Heart left ventricle (tissue), 16 donors: ENCODE measurements at regions of chr3 and their contacts with region 1.

Region 1: DNA sequence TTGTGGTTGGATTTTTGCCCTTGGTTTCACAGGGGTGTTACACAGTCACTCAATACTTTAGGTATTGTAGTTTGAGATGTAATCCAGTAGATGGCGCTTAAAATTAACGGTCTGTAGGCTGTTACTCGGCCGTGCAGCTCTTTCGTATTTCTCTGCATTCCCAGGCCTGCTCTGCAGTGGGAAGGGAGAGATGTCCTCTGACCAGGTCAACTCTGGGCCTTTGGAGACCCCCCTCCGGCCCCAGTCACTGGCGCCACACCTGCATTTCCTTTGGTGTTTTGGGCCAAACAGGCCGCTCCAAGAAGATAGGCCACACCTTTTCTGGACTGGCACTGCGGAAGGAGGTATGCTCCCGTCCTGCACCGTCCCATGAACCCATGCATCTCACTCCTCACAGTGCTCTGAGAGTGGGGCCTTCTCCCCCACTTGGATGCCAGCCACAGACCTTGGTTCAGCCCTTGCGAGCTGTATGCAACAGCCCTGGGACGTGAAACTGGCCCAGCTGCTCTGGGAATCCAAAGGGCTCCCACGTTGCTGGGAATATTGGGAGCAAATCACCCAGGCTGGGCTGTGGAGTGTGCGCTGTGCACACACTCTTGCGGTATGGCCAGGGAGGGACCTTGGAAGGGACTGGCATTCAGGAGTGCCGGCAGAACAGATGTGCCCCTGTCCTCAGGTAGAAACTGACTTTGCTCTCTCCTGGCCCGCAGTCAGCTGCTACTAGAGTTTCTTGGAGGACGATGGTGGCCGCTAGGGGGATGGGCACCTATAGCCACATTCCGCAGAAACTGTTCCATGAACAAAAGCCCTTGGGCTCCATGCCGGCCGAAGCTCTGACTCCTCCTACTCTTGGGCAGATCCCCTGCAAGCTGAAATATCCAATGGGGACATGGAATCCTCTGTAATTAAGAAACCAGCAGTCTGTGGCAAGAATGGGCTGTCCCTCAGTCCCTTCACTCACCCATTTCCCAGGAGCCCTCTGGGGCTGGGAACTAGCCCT is 410.5 kb upstream of the CADM2 start:
- DNase-seq: peak in 2 of 5 donors; percentile 15 to 23
- ATAC-seq: peak in 3 of 4 donors; percentile 63 to 69 (median 65)
- H3K4me3 ChIP-seq: peak overlapping the region in 3 of 12 donors; percentile 10 to 18 (median 16)
- H3K27ac ChIP-seq: no peak overlapping the region
- H3K4me1 ChIP-seq: no peaks in the 10 kb centered on the region
- H3K27me3 ChIP-seq: no peaks in the 10 kb centered on the region
- CTCF ChIP-seq: peak; percentile 15 to 58 (median 42)
- POLR2A ChIP-seq: no peak

Region 2: GRCh38 chr3:84586311-84586826 is 38.1 kb after region 1 on chr3:
- intact Hi-C with region 1: no loop called
- DNase-seq: no peak
- ATAC-seq: no peak
- H3K4me3 ChIP-seq: no peak overlapping the region
- H3K27ac ChIP-seq: no peak overlapping the region
- H3K4me1 ChIP-seq: no peaks in the 10 kb centered on the region
- H3K27me3 ChIP-seq: no peaks in the 10 kb centered on the region
- CTCF ChIP-seq: no peak
- POLR2A ChIP-seq: no peak

Region 3: GRCh38 chr3:84772841-84773240 is 224.6 kb after region 1 on chr3:
- intact Hi-C with region 1: loop called in 2 of 10 experiments (anchors 5 kb)
- DNase-seq: no peak
- ATAC-seq: no peak
- H3K4me3 ChIP-seq: no peak overlapping the region
- H3K27ac ChIP-seq: no peak overlapping the region
- H3K4me1 ChIP-seq: no peaks in the 10 kb centered on the region
- H3K27me3 ChIP-seq: no peaks in the 10 kb centered on the region
- CTCF ChIP-seq: peak in 3 of 12 donors; percentile 4 to 22 (median 10)
- POLR2A ChIP-seq: no peak

Region 4: GRCh38 chr3:85355572-85355971 is 807.3 kb after region 1 on chr3:
- intact Hi-C with region 1: loop called in 2 of 10 experiments (anchors 5 to 10 kb)
- DNase-seq: no peak
- ATAC-seq: no peak
- H3K4me3 ChIP-seq: no peak overlapping the region
- H3K27ac ChIP-seq: no peak overlapping the region
- H3K4me1 ChIP-seq: no peaks in the 10 kb centered on the region
- H3K27me3 ChIP-seq: peaks cover 0 to 2% (median 0%) of the 10 kb centered on the region in 9 donors
- CTCF ChIP-seq: no peak
- POLR2A ChIP-seq: no peak

Region 5: GRCh38 chr3:85360742-85361387 is 812.6 kb after region 1 on chr3:
- intact Hi-C with region 1: loop called in 1 of 10 experiments (anchors 10 kb)
- DNase-seq: peak in 1 of 5 donors; percentile 10
- ATAC-seq: no peak
- H3K4me3 ChIP-seq: no peak overlapping the region
- H3K27ac ChIP-seq: no peak overlapping the region
- H3K4me1 ChIP-seq: no peaks in the 10 kb centered on the region
- H3K27me3 ChIP-seq: peaks cover 0 to 2% (median 0%) of the 10 kb centered on the region in 9 donors
- CTCF ChIP-seq: peak in 6 of 12 donors; percentile 11 to 50 (median 35)
- POLR2A ChIP-seq: no peak

Region 6: DNA sequence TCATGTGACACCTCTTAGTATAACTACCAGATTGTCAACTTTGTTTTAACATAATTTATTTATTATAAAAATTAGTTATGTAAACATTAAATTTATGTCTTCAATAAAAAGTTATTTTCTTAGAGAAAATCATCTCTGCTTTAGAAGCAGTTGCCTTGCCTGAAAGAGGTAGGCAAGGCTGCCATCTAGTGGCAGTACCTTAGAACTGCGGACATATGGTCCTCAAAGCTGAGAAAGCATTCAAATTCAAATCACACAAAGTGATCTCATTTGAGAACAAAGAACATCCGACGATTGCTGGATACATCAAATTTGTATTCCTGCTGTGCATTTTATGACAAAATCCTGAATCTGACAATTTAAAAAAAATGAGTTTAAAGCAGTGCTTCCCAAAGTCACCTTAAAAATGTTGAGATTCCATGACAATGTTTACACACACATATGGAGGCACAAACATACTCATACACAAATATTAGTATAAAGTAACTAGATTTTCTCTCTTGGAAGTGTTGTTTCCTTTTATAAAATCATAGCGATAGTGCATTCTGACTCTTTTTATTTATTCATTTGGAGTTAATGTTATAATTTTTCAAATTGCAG is 1027.9 kb after region 1 on chr3:
- intact Hi-C with region 1: loop called in 8 of 10 experiments (anchors 5 to 10 kb)
- DNase-seq: peak in 4 of 5 donors; percentile 18 to 43 (median 38)
- ATAC-seq: no peak
- H3K4me3 ChIP-seq: no peak overlapping the region
- H3K27ac ChIP-seq: no peak overlapping the region
- H3K4me1 ChIP-seq: no peaks in the 10 kb centered on the region
- H3K27me3 ChIP-seq: no peaks in the 10 kb centered on the region
- CTCF ChIP-seq: peak; percentile 75 to 95 (median 88)
- POLR2A ChIP-seq: no peak